Head of caudate nucleus (tissue), 42 donors: ENCODE measurements at regions of chr5 and their contacts with region 1.

Region 1: GRCh38 chr5:109611505-109611904 is 78.2 kb upstream of the MAN2A1 start:
- DNase-seq: peak in 3 of 42 donors; percentile 35 to 55 (median 45)

Region 2: GRCh38 chr5:109546461-109546860 is 65.0 kb before region 1 on chr5:
- intact Hi-C with region 1: no loop called
- DNase-seq: no peak

Region 3: GRCh38 chr5:109688971-109689739 is 77.7 kb after region 1 on chr5:
- intact Hi-C with region 1: loop called (anchors 5 kb)
- DNase-seq: peak; percentile 68 to 95 (median 89)